Heart right ventricle (tissue), 16 donors: ENCODE measurements at regions of chr18 and their contacts with region 1.

Region 1: DNA sequence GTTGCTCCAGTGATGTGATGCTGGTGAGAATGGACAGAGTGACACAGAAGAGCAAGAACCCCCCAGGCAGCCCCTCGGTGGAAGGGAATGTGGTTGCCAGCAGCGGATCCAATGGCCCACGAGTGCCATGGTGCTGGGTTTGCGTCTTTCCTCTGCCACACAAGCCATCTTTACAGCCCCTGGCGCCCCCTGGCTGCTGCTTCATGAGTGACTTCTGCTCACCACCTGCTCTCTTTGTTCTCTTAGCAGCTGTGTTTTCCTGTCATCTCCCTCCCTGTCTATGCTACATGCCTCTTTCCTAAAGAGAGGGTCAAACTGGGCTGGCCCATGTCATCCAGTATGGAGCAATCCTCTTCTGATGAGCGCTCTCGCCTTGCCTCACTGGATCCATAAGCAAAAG is 300.0 kb upstream of the SMIM21 start:
- DNase-seq: peak; percentile 33 to 36
- ATAC-seq: peak in 3 of 8 donors; percentile 12 to 47 (median 41)
- H3K4me3 ChIP-seq: no peak overlapping the region
- H3K27ac ChIP-seq: no peak overlapping the region
- H3K4me1 ChIP-seq: no peaks in the 10 kb centered on the region
- H3K27me3 ChIP-seq: peaks cover 0 to 29% (median 0%) of the 10 kb centered on the region in 7 donors
- CTCF ChIP-seq: peak in 8 of 9 donors; percentile 28 to 64 (median 54)

Region 2: GRCh38 chr18:74631623-74632283 is 1095.7 kb before region 1 on chr18:
- intact Hi-C with region 1: loop called in 1 of 10 experiments (anchors 10 kb)
- DNase-seq: no peak
- ATAC-seq: no peak
- H3K4me3 ChIP-seq: no peak overlapping the region
- H3K27ac ChIP-seq: peak overlapping the region in 1 of 10 donors; percentile 58
- H3K4me1 ChIP-seq: peaks cover 0 to 23% (median 0%) of the 10 kb centered on the region in 9 donors
- H3K27me3 ChIP-seq: no peaks in the 10 kb centered on the region
- CTCF ChIP-seq: no peak

Region 3: DNA sequence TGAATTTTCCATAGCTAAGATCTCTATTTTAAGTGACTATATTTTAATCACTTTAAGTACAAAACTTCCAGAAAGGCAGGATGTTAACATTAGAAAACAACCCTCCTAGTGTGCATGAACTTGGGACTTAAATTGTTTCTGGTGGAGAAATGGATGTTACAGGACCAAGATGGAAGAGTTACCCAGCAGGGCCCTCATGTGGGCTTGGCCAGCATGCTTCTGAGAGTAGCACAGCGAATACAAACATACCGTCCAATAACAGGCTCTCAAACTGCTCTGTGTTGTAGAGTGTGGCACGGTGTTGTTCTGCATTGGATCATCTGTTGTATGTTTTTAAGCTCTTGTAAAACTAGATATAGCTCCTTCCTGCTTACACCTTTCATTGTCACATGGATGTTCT is 46.2 kb after region 1 on chr18:
- intact Hi-C with region 1: no loop called
- DNase-seq: no peak
- ATAC-seq: no peak
- H3K4me3 ChIP-seq: no peak overlapping the region
- H3K27ac ChIP-seq: no peak overlapping the region
- H3K4me1 ChIP-seq: no peaks in the 10 kb centered on the region
- H3K27me3 ChIP-seq: peaks cover 0 to 27% (median 0%) of the 10 kb centered on the region in 7 donors
- CTCF ChIP-seq: no peak

Region 4: DNA sequence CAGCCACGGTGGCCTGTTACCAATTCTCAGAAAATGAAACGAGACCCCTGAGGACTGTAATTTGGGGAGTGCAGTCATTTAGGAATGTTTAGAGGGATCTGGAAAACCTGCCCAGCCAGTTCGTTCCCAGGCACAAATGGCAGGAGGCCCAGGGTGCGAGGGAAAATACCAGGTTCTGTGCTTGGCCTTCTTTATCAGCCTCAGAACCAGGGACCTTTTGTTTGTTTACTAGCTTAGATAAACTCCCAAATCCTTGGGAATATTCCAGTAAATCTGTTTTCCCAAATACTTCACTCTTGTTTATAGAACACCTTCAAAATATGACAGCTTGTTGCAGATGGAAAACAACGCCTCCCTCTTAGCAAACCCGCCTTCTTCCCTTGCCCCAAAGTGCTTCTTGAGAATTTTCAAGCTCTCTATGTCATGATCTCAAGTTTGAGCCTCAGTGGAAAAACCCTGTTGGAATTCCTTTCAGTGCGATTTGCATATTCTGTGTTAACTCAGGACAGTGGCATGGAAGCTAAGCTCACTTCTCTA is 100.4 kb after region 1 on chr18:
- intact Hi-C with region 1: no loop called
- DNase-seq: no peak
- ATAC-seq: no peak
- H3K4me3 ChIP-seq: no peak overlapping the region
- H3K27ac ChIP-seq: no peak overlapping the region
- H3K4me1 ChIP-seq: no peaks in the 10 kb centered on the region
- H3K27me3 ChIP-seq: no peaks in the 10 kb centered on the region
- CTCF ChIP-seq: no peak

Region 5: GRCh38 chr18:75926811-75927210 is 199.4 kb after region 1 on chr18:
- intact Hi-C with region 1: no loop called
- DNase-seq: no peak
- ATAC-seq: no peak
- H3K4me3 ChIP-seq: no peak overlapping the region
- H3K27ac ChIP-seq: no peak overlapping the region
- H3K4me1 ChIP-seq: peaks cover 0 to 10% (median 4%) of the 10 kb centered on the region in 9 donors
- H3K27me3 ChIP-seq: no peaks in the 10 kb centered on the region
- CTCF ChIP-seq: no peak